ENCODE measurements at regions of chr2 and their contacts with region 1.

Region 1: DNA sequence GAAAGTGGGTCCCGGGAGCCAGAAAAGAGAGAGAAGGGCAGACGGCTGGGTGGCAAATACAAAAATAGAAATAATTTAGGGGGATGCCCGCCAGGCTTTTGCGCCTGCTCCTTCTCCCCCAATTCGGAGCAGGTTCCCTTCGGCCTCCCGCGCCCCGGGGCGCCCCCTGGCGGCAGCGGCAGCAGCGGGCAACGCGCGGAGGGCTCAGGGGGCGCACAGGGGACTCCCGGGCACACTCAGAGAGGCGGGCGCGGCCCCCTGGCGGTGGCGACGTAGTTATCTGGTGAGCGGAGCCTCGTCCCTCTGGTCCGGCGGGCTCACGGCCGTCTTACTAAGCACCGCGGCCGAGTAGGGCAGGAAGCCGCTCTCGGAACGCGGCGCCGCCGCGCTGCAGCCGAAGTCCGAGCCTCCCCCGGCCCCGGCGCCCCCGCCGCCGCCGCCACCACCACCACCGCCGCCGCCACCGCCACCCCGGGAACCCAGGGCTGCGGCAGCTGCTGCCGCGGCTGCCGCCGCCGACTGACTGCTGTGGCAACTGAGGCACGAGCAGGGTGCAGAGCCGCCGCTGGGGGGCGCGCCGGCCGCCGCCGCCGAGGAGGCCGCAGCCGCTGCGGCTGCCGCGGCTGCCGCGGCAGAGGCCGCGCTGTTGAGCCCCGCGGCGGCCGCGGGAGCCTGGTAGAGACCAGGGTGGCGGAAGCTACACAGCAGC is 3.8 kb downstream of the EVX2 start:
- DNase-seq: no peak
- H3K4me3 Mint-ChIP-seq: peak overlapping the region; percentile 15
- H3K27ac Mint-ChIP-seq: peak overlapping the region; percentile 89
- H3K4me1 Mint-ChIP-seq: no peaks in the 10 kb centered on the region
- H3K27me3 Mint-ChIP-seq: peaks cover 72% of the 10 kb centered on the region

Region 2: GRCh38 chr2:174334781-174335251 is 1745.2 kb before region 1 on chr2 and contains the start of gene SP9:
- intact Hi-C with region 1: loop called (anchors 2 kb)
- DNase-seq: no peak
- H3K4me3 Mint-ChIP-seq: peak within 1 kb of the TSS; percentile 53
- H3K27ac Mint-ChIP-seq: peak within 1 kb of the TSS; percentile 81
- H3K4me1 Mint-ChIP-seq: peaks cover 28% of the 10 kb centered on the region
- H3K27me3 Mint-ChIP-seq: peaks cover 77% of the 10 kb centered on the region
- total RNA-seq, gene SP9: not detected in 2 replicates

Region 3: DNA sequence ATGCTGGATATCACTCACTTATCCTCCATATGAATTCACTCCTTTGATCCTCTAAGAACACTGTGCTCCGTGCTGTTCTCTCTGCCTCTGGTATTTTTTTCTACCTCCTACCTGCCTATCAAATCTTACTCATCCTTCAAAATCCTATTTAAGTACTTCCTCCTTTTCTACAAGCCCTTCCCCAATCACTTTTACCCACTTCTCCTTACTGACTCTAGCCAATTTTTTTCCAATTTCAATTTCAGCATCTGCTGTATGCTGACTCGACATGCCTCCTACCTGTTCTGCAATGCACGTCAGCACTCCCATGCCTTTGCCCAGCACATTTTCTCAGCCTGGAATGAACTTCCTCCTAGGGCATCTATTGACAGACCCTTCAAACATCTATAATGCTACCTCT is 40.6 kb before region 1 on chr2:
- intact Hi-C with region 1: no loop called
- DNase-seq: no peak
- H3K4me3 Mint-ChIP-seq: no peak overlapping the region
- H3K27ac Mint-ChIP-seq: no peak overlapping the region
- H3K4me1 Mint-ChIP-seq: no peaks in the 10 kb centered on the region
- H3K27me3 Mint-ChIP-seq: peaks cover 17% of the 10 kb centered on the region